ENCODE measurements at regions of chr13 and their contacts with region 1.

Region 1: GRCh38 chr13:28329395-28330158 is 165.4 kb downstream of the FLT1 start:
- ATAC-seq: peak in 2 of 8 experiments; percentile 79 to 82
- H3K4me3 ChIP-seq: no peak overlapping the region
- H3K27ac ChIP-seq: no peak overlapping the region
- H3K4me1 ChIP-seq: no peaks in the 10 kb centered on the region

Region 2: DNA sequence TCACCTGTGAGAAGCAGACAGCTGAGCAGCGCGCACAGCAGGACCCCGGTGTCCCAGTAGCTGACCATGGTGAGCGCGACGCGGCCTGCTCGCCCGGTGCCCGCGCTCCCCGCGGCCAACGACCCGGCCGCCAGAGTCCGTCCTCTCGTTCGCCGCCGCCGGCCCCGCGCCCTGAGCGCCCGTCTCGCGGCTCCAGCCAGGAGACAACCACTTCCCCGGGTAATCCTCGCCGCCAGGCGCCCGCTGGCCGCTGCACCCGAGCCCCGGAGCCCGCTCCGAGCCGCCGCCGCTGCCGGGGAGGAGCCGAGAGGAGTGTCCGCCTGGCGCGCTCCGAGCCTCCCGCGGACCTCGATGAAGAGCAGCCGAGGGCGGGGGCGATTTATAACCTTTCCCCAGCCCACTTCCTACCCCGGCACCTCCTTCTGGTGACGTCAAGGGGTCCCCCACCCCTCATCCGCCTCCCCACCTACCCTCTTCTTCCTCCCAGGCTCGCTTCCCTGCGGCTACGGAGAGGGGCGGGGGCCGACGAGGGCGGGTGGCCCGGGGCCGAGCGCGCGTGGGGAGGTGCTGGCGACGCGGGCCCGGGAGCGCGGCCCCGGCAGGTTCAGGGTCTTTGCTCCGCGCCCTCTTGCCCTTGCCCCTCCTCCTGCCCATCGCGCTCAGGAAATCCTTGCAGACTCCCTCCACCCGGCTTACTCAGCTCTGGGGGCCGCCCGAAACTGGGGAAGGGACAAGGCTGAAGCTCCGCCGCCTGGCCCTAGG is 165.4 kb after region 1 on chr13 and contains the start of gene FLT1:
- in situ Hi-C with region 1: loop called in 1 of 9 experiments (anchors 25 kb)
- ATAC-seq: peak; percentile 48 to 81 (median 62)
- H3K4me3 ChIP-seq: peak within 1 kb of the TSS; percentile 19 to 31 (median 20)
- H3K27ac ChIP-seq: no peak within 1 kb of the TSS
- H3K4me1 ChIP-seq: peaks cover 8 to 10% of the 10 kb centered on the region in 2 donors
- total RNA-seq, gene FLT1: 0.11 to 43.8 (median 0.88) TPM

Region 3: DNA sequence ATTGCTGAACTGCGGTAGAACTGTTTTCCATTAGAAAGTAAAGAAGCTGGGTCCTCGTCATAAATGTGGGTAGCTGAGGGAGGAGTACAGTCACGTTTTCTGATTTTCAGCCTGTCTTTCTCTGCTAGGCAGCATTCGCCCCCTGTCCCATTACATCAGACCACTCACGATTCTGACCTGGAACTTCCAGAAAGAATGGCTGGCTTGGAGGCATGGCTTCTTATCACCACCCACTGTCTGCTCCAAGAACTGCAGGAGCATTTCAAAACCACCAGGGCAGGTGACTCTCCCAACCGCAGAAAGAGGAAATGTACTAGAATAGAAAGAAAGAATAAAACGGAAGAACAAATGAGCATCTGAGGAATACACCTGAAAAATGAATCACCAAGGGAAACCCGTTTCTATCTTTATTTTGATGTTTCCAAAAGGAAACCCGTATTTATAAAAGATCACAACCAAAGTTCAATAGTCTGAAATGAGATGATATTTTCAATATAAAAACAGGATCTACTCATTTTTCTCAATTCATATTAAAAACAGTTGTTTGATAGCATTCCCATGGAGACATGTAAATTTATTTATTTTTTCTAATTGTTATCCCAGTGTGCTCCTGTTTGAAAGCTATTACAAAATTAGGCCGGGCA is 307.2 kb after region 1 on chr13:
- in situ Hi-C with region 1: loop called in 3 of 9 experiments (anchors 25 kb)
- ATAC-seq: peak in 4 of 8 experiments; percentile 75 to 88 (median 86)
- H3K4me3 ChIP-seq: no peak overlapping the region
- H3K27ac ChIP-seq: no peak overlapping the region
- H3K4me1 ChIP-seq: no peaks in the 10 kb centered on the region

Region 4: DNA sequence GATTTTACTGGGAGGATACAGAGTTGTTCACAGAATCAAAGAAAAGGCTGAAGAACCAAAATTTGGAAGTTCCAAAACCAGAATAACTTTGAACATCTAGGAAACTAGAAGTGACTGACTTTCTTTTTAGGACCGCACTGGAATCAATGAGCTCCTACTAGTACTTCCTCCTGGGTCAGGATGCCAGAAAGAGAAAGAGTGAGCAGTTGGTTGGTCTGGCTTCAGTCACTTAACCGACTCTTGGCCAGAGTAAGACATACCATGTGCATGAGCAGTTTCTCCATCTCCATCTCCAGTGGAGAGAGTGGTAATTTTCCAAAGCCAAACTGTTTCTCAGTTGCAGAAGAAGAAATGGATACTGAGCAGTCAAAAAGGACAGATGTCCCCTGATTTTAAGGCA is 463.4 kb after region 1 on chr13:
- in situ Hi-C with region 1: loop called in 3 of 9 experiments (anchors 25 kb)
- ATAC-seq: peak in 2 of 8 experiments; percentile 18 to 60
- H3K4me3 ChIP-seq: no peak overlapping the region
- H3K27ac ChIP-seq: no peak overlapping the region
- H3K4me1 ChIP-seq: peaks cover 0 to 2% of the 10 kb centered on the region in 2 donors

Measured in motor neuron (in vitro differentiated cells).